Right cardiac atrium (tissue), 5 donors: ENCODE measurements at regions of chr2 and their contacts with region 1.

Region 1: GRCh38 chr2:127415593-127416505 is 2.4 kb upstream of the PROC start:
- DNase-seq: peak; percentile 41 to 82 (median 75)
- ATAC-seq: peak; percentile 72 to 78
- H3K4me3 ChIP-seq: peak overlapping the region; percentile 34
- H3K27ac ChIP-seq: no peak overlapping the region
- H3K4me1 ChIP-seq: no peaks in the 10 kb centered on the region
- H3K27me3 ChIP-seq: no peaks in the 10 kb centered on the region

Region 2: GRCh38 chr2:127342101-127342500 is 73.7 kb before region 1 on chr2:
- intact Hi-C with region 1: loop called in 1 of 4 experiments (anchors 10 kb)
- DNase-seq: no peak
- ATAC-seq: no peak
- H3K4me3 ChIP-seq: no peak overlapping the region
- H3K27ac ChIP-seq: no peak overlapping the region
- H3K4me1 ChIP-seq: no peaks in the 10 kb centered on the region
- H3K27me3 ChIP-seq: no peaks in the 10 kb centered on the region

Region 3: DNA sequence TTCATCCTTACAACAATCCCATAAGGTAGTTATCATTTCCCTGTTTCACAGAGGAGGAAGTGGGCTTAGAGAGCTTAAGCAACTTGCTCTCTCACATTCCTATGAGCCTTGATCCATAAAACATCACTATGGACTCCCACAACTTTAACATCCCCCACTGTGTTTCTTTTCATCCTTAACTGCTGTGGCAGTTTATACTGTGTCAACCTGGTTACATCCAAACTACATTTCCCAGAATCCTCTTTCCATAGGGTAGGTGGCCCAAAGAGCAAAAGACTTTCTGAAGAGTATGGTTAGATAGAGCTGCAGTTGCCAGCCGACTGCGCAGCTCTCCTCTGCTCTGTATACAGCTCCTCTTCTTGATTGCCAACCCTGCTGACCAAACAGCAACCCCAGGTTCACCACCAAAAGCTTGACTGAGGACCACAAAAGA is 50.6 kb before region 1 on chr2:
- intact Hi-C with region 1: loop called in 1 of 4 experiments (anchors 10 kb)
- DNase-seq: no peak
- ATAC-seq: peak in 1 of 2 donors; percentile 23
- H3K4me3 ChIP-seq: no peak overlapping the region
- H3K27ac ChIP-seq: no peak overlapping the region
- H3K4me1 ChIP-seq: peaks cover 8% of the 10 kb centered on the region
- H3K27me3 ChIP-seq: no peaks in the 10 kb centered on the region